ENCODE measurements at regions of chr11 and their contacts with region 1.

Region 1: GRCh38 chr11:94623120-94623735 is 56.1 kb downstream of the PIWIL4 start:
- DNase-seq: peak; percentile 46
- H3K4me3 ChIP-seq: no peak overlapping the region
- H3K27ac ChIP-seq: no peak overlapping the region
- H3K27me3 ChIP-seq: peaks cover 2% of the 10 kb centered on the region
- CTCF ChIP-seq: peak; percentile 90

Region 2: DNA sequence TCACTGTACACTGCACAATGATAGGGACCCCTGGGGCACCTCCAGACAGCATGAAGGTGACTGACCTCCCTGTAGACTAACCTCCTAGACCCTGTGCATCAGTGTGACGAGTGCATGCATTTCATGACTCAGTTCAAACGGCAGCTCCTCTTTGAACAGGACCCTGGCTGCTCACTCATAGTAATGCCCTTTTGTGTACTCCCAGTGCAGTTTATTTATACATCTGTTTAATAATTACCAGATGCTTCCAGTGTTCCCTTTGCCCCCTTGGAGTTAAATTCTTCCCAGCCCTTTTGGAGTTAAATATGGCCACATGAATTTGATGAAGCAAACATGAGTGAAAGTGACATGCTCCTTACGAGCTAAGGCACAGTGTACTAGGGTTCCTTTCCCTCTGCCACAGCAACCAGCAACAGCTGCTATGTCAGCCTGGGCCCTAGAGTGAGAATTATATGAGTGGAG is 422.2 kb before region 1 on chr11:
- CTCF ChIA-PET with region 1: no interaction called
- POLR2A ChIA-PET with region 1: no interaction called
- DNase-seq: peak; percentile 76
- H3K4me3 ChIP-seq: no peak overlapping the region
- H3K27ac ChIP-seq: peak overlapping the region; percentile 82
- H3K27me3 ChIP-seq: no peaks in the 10 kb centered on the region
- CTCF ChIP-seq: no peak

Region 3: DNA sequence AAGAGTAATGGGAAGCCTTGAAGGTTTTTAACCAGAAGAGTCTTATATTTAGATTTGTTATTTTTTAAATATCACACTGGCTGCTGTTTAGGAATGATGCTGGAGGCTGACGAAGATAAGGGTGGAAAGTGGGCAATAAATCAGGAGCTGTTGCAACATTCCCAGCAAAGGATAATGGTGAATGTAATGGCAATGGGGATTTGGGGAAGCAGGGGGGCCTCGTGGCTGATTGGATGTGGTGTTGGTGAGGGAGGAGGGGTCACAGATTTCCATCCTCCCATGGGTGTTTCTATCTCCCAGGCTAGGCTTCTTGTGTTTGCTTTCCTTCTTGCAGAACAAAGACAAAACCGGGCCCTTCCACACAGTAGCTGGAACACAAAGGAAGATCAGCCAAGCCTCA is 24.7 kb after region 1 on chr11:
- CTCF ChIA-PET with region 1: no interaction called
- POLR2A ChIA-PET with region 1: no interaction called
- DNase-seq: no peak
- H3K4me3 ChIP-seq: no peak overlapping the region
- H3K27ac ChIP-seq: no peak overlapping the region
- H3K27me3 ChIP-seq: peaks cover 2% of the 10 kb centered on the region
- CTCF ChIP-seq: no peak

Region 4: GRCh38 chr11:94681140-94681539 is 57.9 kb after region 1 on chr11:
- CTCF ChIA-PET with region 1: no interaction called
- POLR2A ChIA-PET with region 1: no interaction called
- DNase-seq: no peak
- H3K4me3 ChIP-seq: no peak overlapping the region
- H3K27ac ChIP-seq: no peak overlapping the region
- H3K27me3 ChIP-seq: peaks cover 24% of the 10 kb centered on the region
- CTCF ChIP-seq: no peak

Region 5: GRCh38 chr11:94762208-94762607 is 139.0 kb after region 1 on chr11:
- CTCF ChIA-PET with region 1: interaction called, 15 read pairs
- POLR2A ChIA-PET with region 1: no interaction called
- DNase-seq: no peak
- H3K4me3 ChIP-seq: no peak overlapping the region
- H3K27ac ChIP-seq: no peak overlapping the region
- H3K27me3 ChIP-seq: no peaks in the 10 kb centered on the region
- CTCF ChIP-seq: peak; percentile 40

Region 6: GRCh38 chr11:94809251-94809650 is 186.0 kb after region 1 on chr11:
- CTCF ChIA-PET with region 1: interaction called, 10 read pairs
- POLR2A ChIA-PET with region 1: no interaction called
- DNase-seq: no peak
- H3K4me3 ChIP-seq: no peak overlapping the region
- H3K27ac ChIP-seq: no peak overlapping the region
- H3K27me3 ChIP-seq: no peaks in the 10 kb centered on the region
- CTCF ChIP-seq: no peak

Region 7: GRCh38 chr11:94885133-94885532 is 261.9 kb after region 1 on chr11:
- CTCF ChIA-PET with region 1: interaction called, 10 read pairs
- POLR2A ChIA-PET with region 1: no interaction called
- DNase-seq: no peak
- H3K4me3 ChIP-seq: no peak overlapping the region
- H3K27ac ChIP-seq: no peak overlapping the region
- H3K27me3 ChIP-seq: no peaks in the 10 kb centered on the region
- CTCF ChIP-seq: no peak

Region 8: DNA sequence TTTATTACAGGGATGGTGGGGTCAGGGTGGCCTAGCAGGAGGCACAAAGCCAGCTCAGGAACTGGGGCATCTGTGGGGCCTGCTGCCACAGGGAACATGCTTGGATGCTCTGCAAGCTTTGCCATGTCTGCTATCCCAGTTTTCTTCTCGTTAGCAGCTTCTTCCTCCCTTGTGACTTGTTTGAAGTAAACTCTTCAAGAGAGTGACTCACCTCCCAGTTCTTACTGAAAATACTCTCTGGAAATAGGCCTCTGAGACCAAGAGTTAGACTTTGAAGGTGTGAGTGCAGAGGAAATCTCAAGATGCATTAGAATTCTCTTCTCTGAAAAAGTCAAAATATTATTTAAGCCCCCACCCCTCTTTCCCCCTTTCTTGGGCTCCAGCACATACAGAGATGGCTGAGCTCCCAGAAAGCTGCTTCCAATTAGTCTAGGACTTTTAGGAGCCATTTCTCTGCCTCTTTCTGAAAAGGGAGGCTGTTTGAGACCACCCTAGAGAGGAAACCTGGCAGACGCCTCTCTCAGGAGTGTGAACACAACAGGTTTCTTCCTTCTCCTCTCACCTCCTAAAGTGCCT is 335.0 kb after region 1 on chr11:
- CTCF ChIA-PET with region 1: interaction called, 26 read pairs
- POLR2A ChIA-PET with region 1: no interaction called
- DNase-seq: no peak
- H3K4me3 ChIP-seq: no peak overlapping the region
- H3K27ac ChIP-seq: peak overlapping the region; percentile 54
- H3K27me3 ChIP-seq: no peaks in the 10 kb centered on the region
- CTCF ChIP-seq: no peak

Measured in AG04450 (cell line).